ENCODE measurements at regions of chr5 and their contacts with region 1.

Region 1: GRCh38 chr5:131289738-131290137 is 25.9 kb downstream of the CDC42SE2 start:
- DNase-seq: peak in 2 of 14 experiments; percentile 26 to 42
- ATAC-seq: peak; percentile 57
- H3K4me3 ChIP-seq: peak overlapping the region; percentile 30
- H3K4me3 Mint-ChIP-seq: peak overlapping the region; percentile 80
- H3K27ac ChIP-seq: peak overlapping the region; percentile 52 to 68
- H3K27ac Mint-ChIP-seq: peak overlapping the region; percentile 92
- H3K4me1 ChIP-seq: peaks cover 71% of the 10 kb centered on the region
- H3K4me1 Mint-ChIP-seq: peaks cover 76% of the 10 kb centered on the region
- H3K27me3 ChIP-seq: no peaks in the 10 kb centered on the region
- H3K27me3 Mint-ChIP-seq: no peaks in the 10 kb centered on the region
- CTCF ChIP-seq: no peak

Region 2: GRCh38 chr5:131270809-131271208 is 18.9 kb before region 1 on chr5:
- CTCF ChIA-PET with region 1: interaction called, 4 read pairs
- POLR2A ChIA-PET with region 1: interaction called, 45 read pairs
- intact Hi-C with region 1: loop called in 1 of 2 experiments (anchors 2 kb)
- DNase-seq: no peak
- ATAC-seq: no peak
- H3K4me3 ChIP-seq: peak overlapping the region; percentile 41
- H3K4me3 Mint-ChIP-seq: peak overlapping the region; percentile 81
- H3K27ac ChIP-seq: peak overlapping the region; percentile 75 to 87
- H3K27ac Mint-ChIP-seq: peak overlapping the region; percentile 85
- H3K4me1 ChIP-seq: peaks cover 64% of the 10 kb centered on the region
- H3K4me1 Mint-ChIP-seq: peaks cover 65% of the 10 kb centered on the region
- H3K27me3 ChIP-seq: no peaks in the 10 kb centered on the region
- H3K27me3 Mint-ChIP-seq: no peaks in the 10 kb centered on the region
- CTCF ChIP-seq: no peak

Region 3: GRCh38 chr5:131303537-131303936 is 13.8 kb after region 1 on chr5:
- CTCF ChIA-PET with region 1: no interaction called
- POLR2A ChIA-PET with region 1: interaction called, 5 read pairs
- intact Hi-C with region 1: loop called in 1 of 2 experiments (anchors 2 kb)
- DNase-seq: no peak
- ATAC-seq: no peak
- H3K4me3 ChIP-seq: no peak overlapping the region
- H3K4me3 Mint-ChIP-seq: no peak overlapping the region
- H3K27ac ChIP-seq: no peak overlapping the region
- H3K27ac Mint-ChIP-seq: peak overlapping the region; percentile 50
- H3K4me1 ChIP-seq: peaks cover 40% of the 10 kb centered on the region
- H3K4me1 Mint-ChIP-seq: peaks cover 78% of the 10 kb centered on the region
- H3K27me3 ChIP-seq: no peaks in the 10 kb centered on the region
- H3K27me3 Mint-ChIP-seq: no peaks in the 10 kb centered on the region
- CTCF ChIP-seq: no peak

Measured in CD4-positive, alpha-beta T cell (primary cell).